PC-3 (cell line): ENCODE measurements at regions of chr3 and their contacts with region 1.

Region 1: GRCh38 chr3:48685602-48686511 is at the start of gene NCKIPSD:
- DNase-seq: peak; percentile 92
- ATAC-seq: peak; percentile 81
- H3K4me3 ChIP-seq: peak within 1 kb of the TSS; percentile 90
- H3K27ac ChIP-seq: peak within 1 kb of the TSS; percentile 51
- H3K4me1 ChIP-seq: peaks cover 20% of the 10 kb centered on the region
- H3K27me3 ChIP-seq: no peaks in the 10 kb centered on the region
- CTCF ChIP-seq: peak; percentile 79
- total RNA-seq, gene NCKIPSD: 56.3 and 66.8 TPM in 2 replicates

Region 2: DNA sequence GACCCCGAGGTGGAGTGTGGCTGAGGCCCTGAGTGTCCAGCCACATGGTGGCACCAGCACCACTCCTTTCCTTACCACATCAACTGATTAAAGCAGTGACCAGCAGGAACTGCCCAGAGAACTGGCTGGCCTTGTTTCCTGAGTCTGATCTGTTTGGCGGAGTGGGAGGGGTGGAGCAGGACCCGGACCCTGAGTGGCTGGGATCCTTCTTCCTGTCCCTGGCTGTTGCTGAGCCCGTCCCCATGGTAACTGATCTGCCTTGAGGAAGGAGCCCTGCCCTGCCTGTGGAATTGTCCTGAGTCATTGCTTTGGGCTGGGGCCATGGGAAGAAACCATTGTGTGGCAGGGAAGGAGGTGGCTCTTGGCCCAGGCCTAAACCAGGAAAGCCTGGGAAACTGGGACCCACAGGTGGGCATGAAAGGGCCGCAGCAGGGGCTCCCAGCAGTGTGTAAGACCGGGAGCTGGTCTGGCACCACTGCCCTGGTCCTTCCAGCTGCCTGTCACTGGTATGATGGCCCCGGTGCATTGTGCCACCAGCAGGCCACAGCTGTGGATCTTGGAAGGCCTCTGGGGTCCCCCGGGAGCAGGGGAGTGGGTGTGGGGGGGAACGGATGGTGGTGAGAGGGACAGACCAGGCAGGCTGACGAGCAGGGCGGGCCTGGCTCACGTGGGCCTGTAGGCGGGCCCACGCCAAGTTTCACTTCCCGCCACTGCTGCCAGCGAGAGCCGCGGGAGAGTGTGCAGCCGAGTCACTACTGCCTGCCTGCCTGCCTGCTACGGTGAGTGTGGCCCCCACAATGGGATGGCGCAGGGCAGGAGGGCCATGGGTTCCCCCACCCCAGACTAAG is 220.1 kb before region 1 on chr3:
- CTCF ChIA-PET with region 1: no interaction called
- POLR2A ChIA-PET with region 1: no interaction called
- intact Hi-C with region 1: loop called (anchors 1 kb)
- DNase-seq: peak; percentile 99
- ATAC-seq: peak; percentile 94
- H3K4me3 ChIP-seq: peak overlapping the region; percentile 51
- H3K27ac ChIP-seq: peak overlapping the region; percentile 99
- H3K4me1 ChIP-seq: peaks cover 31% of the 10 kb centered on the region
- H3K27me3 ChIP-seq: no peaks in the 10 kb centered on the region
- CTCF ChIP-seq: peak; percentile 94

Region 3: GRCh38 chr3:48635222-48636021 is 50.4 kb before region 1 on chr3 and contains the start of gene SLC26A6:
- CTCF ChIA-PET with region 1: interaction called, 3 read pairs
- POLR2A ChIA-PET with region 1: no interaction called
- intact Hi-C with region 1: loop called (anchors 2 kb)
- DNase-seq: peak; percentile 98
- ATAC-seq: peak; percentile 95
- H3K4me3 ChIP-seq: peak within 1 kb of the TSS; percentile 90
- H3K27ac ChIP-seq: no peak within 1 kb of the TSS; the same call in 1 of the 2 replicates
- H3K4me1 ChIP-seq: peaks cover 26% of the 10 kb centered on the region
- H3K27me3 ChIP-seq: no peaks in the 10 kb centered on the region
- CTCF ChIP-seq: peak; percentile 74
- total RNA-seq, gene SLC26A6: 38.1 and 44.9 TPM in 2 replicates

Region 4: DNA sequence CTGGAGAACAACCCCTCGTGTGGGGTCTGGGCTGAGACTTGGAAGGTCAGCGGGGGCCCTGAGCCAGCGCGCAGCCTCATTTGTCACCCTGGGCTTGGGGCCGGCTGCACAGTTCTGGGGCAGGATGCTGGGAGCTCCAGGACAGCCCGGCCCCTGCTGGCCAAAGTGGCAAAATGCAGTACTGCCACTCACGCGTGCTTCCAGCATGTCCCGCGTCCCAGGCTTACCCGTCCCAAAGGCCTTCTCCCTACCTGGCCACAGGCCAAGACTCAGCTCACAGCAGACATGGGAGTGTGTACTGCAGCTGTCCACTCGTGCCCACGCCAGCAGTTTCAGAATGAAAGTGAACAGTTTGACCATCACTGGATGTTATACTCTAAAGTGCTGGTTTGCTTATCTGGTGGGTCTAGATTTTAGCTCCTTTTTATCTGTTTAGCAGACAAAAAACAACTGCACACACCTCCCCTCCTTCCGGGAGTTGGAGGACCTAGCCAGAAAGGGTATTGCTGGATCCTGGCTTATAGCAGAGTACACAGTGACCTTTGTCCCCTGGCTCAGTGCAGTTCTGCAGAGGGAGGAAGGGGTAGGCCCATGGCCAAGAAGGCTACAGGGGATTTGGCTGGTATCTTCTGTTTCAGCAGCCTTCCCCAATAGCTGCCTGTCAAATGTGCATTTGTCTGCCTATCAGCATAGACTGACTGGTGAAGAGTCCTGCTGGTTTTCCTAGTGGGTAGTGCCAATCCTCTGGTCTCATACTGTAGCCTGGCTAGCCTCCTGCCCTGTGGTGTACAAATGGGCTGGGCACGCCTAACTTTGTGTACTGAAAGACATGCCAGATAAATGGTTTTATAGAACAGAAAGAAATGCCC is 54.3 kb after region 1 on chr3:
- CTCF ChIA-PET with region 1: interaction called, 9 read pairs
- POLR2A ChIA-PET with region 1: no interaction called
- intact Hi-C with region 1: loop called (anchors 1 kb)
- DNase-seq: peak; percentile 86
- ATAC-seq: peak; percentile 96
- H3K4me3 ChIP-seq: peak overlapping the region; percentile 31; the same call in 1 of the 2 replicates
- H3K27ac ChIP-seq: peak overlapping the region; percentile 47
- H3K4me1 ChIP-seq: peaks cover 12% of the 10 kb centered on the region
- H3K27me3 ChIP-seq: no peaks in the 10 kb centered on the region
- CTCF ChIP-seq: peak; percentile 91

Region 5: GRCh38 chr3:48765376-48765775 is 79.5 kb after region 1 on chr3:
- CTCF ChIA-PET with region 1: interaction called, 10 read pairs
- POLR2A ChIA-PET with region 1: no interaction called
- intact Hi-C with region 1: loop called (anchors 1 kb)
- DNase-seq: peak; percentile 49
- ATAC-seq: peak; percentile 97
- H3K4me3 ChIP-seq: no peak overlapping the region
- H3K27ac ChIP-seq: no peak overlapping the region
- H3K4me1 ChIP-seq: no peaks in the 10 kb centered on the region
- H3K27me3 ChIP-seq: no peaks in the 10 kb centered on the region
- CTCF ChIP-seq: peak; percentile 64